HEK293T (cell line): ENCODE measurements at regions of chr3 and their contacts with region 1.

Region 1: DNA sequence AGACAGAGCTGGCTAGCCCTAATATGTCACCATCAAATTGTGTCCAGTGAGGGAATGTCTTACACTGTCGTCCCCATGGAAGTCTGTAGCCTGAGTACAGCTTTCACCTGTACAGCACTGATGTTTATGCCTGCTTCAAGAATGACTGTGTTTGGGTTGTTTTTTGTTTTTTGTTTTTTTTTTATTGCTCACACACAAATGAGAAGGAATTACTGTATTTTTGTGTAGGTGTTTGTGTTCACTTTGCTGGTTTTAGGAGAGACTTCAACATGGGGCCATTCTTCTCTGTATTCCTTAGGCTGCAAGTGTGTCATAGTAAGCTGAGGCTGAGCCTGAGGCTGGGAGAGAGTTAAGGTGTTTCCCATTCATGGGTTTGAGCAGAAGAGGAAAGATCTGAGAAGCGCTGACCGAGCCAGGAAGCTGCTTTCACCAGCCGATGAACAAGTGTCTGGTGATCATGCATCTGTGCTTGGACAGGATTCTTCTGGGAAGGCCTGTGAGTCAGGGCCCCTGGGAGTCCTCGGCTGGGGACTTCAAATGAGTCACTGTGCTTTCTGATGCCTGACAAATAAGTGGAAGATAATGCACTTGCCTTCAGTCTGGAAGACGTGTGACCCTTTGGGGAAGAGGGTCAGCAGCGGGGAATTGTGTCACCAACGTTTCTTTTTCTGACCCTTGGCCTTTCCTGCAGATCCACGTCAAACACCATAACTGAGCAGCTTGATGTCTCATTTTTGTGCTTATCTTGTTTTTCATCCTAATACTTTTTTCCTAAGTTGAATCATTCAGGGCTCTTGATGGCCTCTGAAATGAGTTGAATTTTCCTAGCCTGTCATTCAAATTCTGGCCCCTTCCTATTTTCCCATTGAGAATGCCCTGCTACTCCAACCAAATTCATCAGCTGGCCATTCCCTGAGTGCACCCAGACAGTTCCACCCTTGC is 36.7 kb upstream of the ZBTB38 start:
- DNase-seq: peak; percentile 22

Region 2: DNA sequence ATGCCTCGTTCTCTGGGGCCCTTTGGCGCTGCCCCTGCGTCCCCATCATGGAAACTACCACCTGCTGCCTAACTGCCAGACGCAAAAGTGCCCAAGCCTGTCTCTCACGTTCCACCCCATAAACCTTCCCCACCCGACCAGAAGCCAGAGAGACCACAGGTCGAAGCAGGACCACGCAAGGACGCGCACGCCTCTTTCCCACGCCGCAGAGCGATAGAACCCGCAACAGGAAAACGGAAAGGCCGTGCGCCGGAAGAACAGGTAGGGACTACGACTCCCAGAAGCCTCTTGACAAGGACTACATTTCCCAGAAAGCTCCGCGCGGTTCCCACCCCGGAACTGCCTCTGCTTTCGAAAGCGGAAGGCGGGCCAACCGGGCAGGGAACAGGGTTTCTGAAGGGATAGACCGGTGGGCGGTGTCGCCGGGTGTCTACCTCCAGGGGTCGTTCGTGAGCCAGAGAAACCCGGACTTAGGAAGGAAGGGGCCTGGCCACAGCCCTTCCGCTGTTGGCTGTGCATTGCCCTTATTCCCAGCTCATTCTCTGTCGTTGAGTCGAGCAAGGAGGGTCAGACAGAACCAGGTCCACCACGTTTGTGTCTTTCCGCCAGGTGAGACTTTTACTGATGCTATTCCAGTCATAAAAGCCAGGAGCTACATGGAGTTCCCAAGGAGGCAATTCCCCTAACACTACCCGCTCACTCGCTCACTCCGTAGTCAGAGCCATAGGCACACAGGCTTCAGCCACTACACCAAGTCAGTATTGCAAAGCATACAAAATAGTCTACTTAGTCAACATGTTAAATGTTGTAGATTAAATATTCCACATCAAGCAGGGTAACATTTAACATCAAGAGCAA is 19.9 kb before region 1 on chr3:
- CTCF ChIA-PET with region 1: interaction called, 9 read pairs
- POLR2A ChIA-PET with region 1: interaction called, 11 read pairs
- DNase-seq: peak; percentile 96

Region 3: GRCh38 chr3:141346418-141346817 is 14.8 kb after region 1 on chr3:
- CTCF ChIA-PET with region 1: no interaction called
- POLR2A ChIA-PET with region 1: no interaction called
- DNase-seq: no peak